ENCODE measurements at regions of chr6 and their contacts with region 1.

Region 1: GRCh38 chr6:33147807-33148666 is 44.2 kb downstream of the COL11A2 start:
- DNase-seq: peak; percentile 58
- H3K4me3 Mint-ChIP-seq: no peak overlapping the region
- H3K27ac Mint-ChIP-seq: no peak overlapping the region
- H3K4me1 Mint-ChIP-seq: no peaks in the 10 kb centered on the region
- H3K27me3 Mint-ChIP-seq: peaks cover 29% of the 10 kb centered on the region
- CTCF ChIP-seq: peak; percentile 65

Region 2: DNA sequence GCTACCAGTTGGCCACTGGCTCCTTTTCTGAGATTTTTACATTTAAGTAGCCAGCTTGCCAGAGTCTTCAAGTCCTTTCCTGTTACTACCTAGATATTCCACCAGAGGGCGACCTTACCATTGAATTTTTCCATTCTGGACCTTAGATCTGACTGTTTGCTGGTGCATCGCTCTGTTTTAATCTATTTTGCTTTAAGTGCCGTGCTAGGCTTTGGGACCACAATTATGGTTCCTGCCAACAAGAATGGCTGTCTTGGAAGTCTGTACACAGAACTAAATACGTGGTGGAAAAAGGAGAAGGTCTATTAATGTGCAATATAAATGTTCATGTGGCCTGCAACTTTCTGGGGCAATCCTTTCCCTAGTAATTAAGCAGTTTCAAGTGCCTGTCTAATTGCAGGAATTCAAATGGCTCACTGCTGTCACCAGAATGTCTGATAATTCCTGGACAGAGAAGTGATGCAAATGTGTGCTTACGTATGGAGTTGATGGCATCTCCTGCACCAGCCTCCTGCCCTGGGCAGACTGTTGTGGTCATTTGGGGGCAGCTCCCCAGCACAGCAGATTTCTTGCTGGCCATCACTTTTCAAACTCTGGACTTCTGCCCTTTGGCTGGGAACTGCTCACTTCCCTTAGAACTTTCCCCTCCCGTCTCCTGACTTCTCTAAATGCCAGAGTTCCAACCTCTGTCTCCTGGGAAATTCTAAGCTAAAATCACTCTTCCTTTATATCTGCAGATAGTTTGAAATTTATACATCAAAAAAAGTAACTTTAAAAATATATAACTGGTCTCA is 133.0 kb before region 1 on chr6:
- CTCF ChIA-PET with region 1: interaction called, 63 read pairs
- POLR2A ChIA-PET with region 1: interaction called, 3 read pairs
- intact Hi-C with region 1: loop called (anchors 1 kb)
- DNase-seq: peak; percentile 72
- H3K4me3 Mint-ChIP-seq: no peak overlapping the region
- H3K27ac Mint-ChIP-seq: no peak overlapping the region
- H3K4me1 Mint-ChIP-seq: no peaks in the 10 kb centered on the region
- H3K27me3 Mint-ChIP-seq: peaks cover 98% of the 10 kb centered on the region
- CTCF ChIP-seq: peak; percentile 62

Region 3: GRCh38 chr6:33118525-33119123 is 29.4 kb before region 1 on chr6:
- CTCF ChIA-PET with region 1: interaction called, 63 read pairs
- POLR2A ChIA-PET with region 1: interaction called, 3 read pairs
- intact Hi-C with region 1: loop called (anchors 1 kb)
- DNase-seq: peak; percentile 62
- H3K4me3 Mint-ChIP-seq: no peak overlapping the region
- H3K27ac Mint-ChIP-seq: no peak overlapping the region
- H3K4me1 Mint-ChIP-seq: no peaks in the 10 kb centered on the region
- H3K27me3 Mint-ChIP-seq: peaks cover 84% of the 10 kb centered on the region
- CTCF ChIP-seq: peak; percentile 53

Region 4: GRCh38 chr6:33123732-33124524 is 24.1 kb before region 1 on chr6:
- CTCF ChIA-PET with region 1: interaction called, 63 read pairs
- POLR2A ChIA-PET with region 1: interaction called, 3 read pairs
- intact Hi-C with region 1: no loop called
- DNase-seq: peak; percentile 70
- H3K4me3 Mint-ChIP-seq: no peak overlapping the region
- H3K27ac Mint-ChIP-seq: no peak overlapping the region
- H3K4me1 Mint-ChIP-seq: no peaks in the 10 kb centered on the region
- H3K27me3 Mint-ChIP-seq: peaks cover 71% of the 10 kb centered on the region
- CTCF ChIP-seq: peak; percentile 41

Region 5: DNA sequence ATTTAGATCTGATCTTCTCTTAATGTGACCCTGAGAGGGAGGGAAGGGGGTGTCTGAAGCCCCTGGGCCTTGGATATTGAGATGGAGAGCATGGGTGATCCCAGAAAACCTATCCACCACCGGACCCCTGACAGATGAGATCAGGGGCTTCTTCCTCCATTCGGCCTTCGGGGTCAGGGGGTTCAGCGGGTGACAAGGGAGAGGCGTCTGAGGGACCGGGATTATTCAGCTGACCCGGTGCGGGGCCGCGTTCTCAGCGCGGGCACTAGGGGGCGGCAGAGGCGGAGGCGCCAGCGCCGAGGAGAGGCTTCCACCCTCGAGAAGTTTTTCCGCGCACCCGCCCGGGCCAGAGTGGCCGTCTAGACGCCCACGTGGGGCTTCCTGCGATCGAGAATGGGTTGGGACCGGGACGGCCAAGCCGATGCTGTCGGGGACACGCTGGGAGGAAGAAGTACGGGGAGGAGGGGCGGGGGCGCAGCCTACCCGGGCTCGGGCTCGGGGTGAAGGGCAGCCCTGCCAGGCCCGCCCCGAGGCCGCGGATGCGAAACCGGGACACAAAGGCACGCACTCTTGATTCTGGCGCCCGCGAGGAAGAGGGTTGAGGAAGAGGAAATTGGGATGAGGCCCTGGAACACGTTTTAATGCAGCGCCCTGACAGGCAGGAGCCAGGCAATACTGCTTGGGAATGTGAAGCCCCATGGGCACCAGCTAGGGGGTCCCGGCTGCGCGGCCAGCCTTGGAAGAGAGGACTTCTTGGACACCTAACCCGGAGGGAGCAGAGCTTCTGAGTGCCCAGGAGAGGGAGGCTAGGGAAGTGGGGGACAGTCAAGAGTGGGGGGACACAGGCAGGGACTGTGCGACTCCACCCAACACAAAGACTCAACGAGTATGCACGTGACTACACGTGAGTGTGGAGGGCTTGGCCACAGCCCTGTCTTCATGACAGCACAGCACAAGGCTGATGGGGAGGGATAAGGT is 13.6 kb after region 1 on chr6:
- CTCF ChIA-PET with region 1: interaction called, 15 read pairs
- POLR2A ChIA-PET with region 1: interaction called, 4 read pairs
- intact Hi-C with region 1: no loop called
- DNase-seq: peak; percentile 62
- H3K4me3 Mint-ChIP-seq: peak overlapping the region; percentile 85
- H3K27ac Mint-ChIP-seq: peak overlapping the region; percentile 88
- H3K4me1 Mint-ChIP-seq: peaks cover 12% of the 10 kb centered on the region
- H3K27me3 Mint-ChIP-seq: peaks cover 12% of the 10 kb centered on the region
- CTCF ChIP-seq: peak; percentile 93

Region 6: GRCh38 chr6:33425668-33426577 is 277.9 kb after region 1 on chr6:
- CTCF ChIA-PET with region 1: no interaction called
- POLR2A ChIA-PET with region 1: no interaction called
- intact Hi-C with region 1: no loop called
- DNase-seq: peak; percentile 83
- H3K4me3 Mint-ChIP-seq: peak overlapping the region; percentile 97
- H3K27ac Mint-ChIP-seq: peak overlapping the region; percentile 85
- H3K4me1 Mint-ChIP-seq: peaks cover 61% of the 10 kb centered on the region
- H3K27me3 Mint-ChIP-seq: no peaks in the 10 kb centered on the region
- CTCF ChIP-seq: peak; percentile 68